ENCODE measurements at regions of chr5 and their contacts with region 1.

Region 1: DNA sequence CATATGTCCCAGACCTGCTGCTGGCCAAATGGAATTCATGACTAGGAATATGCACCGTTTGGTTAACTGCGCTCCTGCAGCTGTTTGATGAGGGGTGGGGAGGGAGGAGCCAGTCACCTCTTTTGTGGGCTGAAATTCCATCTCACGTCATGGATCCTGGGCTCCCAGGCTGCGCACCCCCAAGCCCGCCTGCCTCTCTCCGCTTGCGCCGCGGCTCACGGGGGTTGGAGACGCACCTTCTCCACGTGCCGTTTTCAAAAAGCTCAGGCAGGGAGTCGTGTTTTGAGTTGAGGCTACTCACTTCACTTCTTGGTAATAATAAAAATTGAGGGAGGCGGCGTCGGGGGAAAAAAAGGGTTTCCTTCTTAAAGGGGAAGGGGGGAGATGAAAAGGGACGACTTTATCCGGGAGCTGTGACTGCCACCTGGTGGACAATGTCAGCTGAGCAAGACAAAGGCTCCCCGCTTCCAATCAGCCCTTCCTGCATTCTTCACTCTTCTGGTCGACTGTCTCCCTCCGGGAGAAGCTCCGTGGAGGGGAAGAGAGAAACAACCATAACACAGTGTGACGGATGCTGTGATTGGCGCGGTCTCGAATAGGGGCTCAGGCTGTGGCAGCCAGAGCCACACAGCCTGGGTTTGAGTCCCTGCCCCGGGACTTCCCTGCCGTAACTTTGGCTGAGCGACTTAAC is 15.9 kb upstream of the C5orf47 start:
- DNase-seq: peak; percentile 83 to 86
- ATAC-seq: peak; percentile 55 to 72
- H3K4me3 ChIP-seq: peak overlapping the region; percentile 35; the same call in 2 of the 3 replicates
- H3K27ac ChIP-seq: peak overlapping the region; percentile 96 to 97
- H3K4me1 ChIP-seq: peaks cover 53% of the 10 kb centered on the region
- CTCF ChIP-seq: peak; percentile 94
- EP300 ChIP-seq: no peak
- POLR2A ChIP-seq: no peak
- RAD21 ChIP-seq: peak; percentile 97 to 99

Region 2: DNA sequence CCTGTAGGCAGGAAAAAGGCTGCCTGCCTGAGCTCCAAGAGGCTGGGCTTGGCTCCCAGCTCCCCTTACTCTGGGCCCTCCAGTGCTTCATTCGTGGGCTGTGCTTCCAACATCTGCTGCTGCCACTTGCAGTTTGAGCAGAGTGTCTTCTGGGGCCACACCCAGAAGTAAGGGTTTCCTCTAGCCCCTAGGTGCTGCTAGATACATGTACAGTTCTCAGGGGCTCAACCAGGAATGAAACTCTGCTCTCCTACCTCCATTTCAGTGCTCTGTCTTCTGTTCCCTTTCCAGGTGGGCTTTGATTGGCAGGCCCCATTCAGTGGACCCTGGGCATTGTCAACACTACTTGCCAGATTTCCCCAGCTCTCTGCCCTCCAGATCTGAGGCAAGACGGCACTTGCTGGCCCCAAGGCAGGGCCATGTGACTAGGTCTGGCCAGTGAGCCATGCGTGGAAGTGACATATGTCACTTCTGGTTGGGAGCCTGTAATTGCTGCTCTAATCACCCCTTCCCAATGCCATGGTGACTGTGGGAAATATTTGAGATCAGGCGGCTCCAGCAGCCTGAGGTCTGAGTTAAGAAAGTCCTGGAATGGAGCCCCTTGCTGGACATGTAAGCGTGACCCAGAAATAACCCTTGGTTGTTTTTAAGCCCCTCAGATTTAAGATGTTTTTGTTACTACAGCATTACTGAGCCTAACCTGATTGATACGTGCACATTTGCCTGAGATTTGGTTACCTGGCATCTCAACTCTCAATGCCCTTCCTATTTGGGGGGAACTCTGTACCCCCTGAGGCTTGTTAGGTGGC is 347.2 kb before region 1 on chr5:
- CTCF ChIA-PET with region 1: interaction called, 229 read pairs
- POLR2A ChIA-PET with region 1: no interaction called
- DNase-seq: no peak
- ATAC-seq: peak; percentile 44 to 67; a peak in 4 of 6 replicates
- H3K4me3 ChIP-seq: no peak overlapping the region
- H3K27ac ChIP-seq: peak overlapping the region; percentile 45 to 76; a peak in 5 of 6 replicates
- H3K4me1 ChIP-seq: peaks cover 28% of the 10 kb centered on the region
- CTCF ChIP-seq: no peak; the same call in 2 of the 3 replicates
- EP300 ChIP-seq: no peak
- POLR2A ChIP-seq: no peak
- RAD21 ChIP-seq: peak; percentile 23 to 52; a peak in 3 of 5 replicates

Region 3: DNA sequence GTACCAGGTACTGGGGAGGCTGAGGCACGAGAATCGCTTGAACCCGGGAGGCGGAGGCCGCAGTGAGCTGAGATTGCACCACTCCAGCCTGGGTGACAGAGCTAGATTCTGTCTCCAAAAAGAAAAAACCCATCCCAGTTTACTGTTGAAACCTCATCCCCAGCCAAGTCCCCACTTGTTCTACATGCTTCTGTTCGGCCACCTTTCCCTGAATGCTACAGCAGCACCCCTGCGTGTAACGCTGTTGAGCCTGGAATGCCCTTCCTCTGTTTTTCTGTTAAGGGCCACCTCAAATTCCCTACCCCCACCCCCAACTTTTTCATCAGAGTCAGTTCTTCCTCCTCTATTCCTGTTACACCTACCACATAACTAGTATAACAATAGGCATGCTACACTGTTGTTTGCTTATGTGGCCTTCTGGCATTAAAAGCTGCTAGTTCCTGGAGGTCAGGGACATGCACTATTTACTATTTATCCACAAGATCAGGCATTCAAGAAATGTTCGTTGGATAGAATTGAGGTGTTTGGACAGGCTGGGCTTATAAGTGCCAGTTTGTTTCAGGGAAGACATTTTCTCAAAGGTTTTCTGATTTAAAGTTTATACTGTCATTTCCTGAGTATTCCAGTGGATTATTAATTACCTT is 31.2 kb before region 1 on chr5:
- CTCF ChIA-PET with region 1: interaction called, 14 read pairs
- POLR2A ChIA-PET with region 1: no interaction called
- DNase-seq: peak in 1 of 2 experiments; percentile 85
- ATAC-seq: peak; percentile 71 to 93
- H3K4me3 ChIP-seq: peak overlapping the region; percentile 1; the same call in 2 of the 3 replicates
- H3K27ac ChIP-seq: peak overlapping the region; percentile 66 to 84
- H3K4me1 ChIP-seq: peaks cover 62% of the 10 kb centered on the region
- CTCF ChIP-seq: no peak
- EP300 ChIP-seq: no peak
- POLR2A ChIP-seq: no peak
- RAD21 ChIP-seq: peak in 1 of 2 experiments; percentile 14; a peak in 1 of 5 replicates

Region 4: DNA sequence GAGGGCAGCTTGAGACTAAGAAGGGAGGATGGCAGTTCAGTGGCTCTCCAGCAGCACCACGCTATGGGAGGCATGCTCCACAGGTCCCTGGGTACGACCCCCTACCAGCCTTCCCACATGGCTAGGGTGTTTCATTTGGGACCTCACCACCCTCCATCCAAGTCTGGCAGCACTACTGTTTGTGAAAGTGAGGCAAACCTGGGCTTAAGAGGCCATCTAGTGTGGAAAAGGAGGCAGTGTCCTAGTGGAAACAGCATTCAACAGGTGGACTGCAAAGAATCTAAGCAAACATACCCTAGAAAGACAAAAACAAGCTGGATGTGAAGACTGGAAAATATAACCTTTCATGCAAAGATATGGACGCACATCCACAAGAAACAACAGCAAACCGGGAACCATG is 11.1 kb after region 1 on chr5:
- CTCF ChIA-PET with region 1: interaction called, 43 read pairs
- POLR2A ChIA-PET with region 1: no interaction called
- DNase-seq: peak in 1 of 2 experiments; percentile 49
- ATAC-seq: peak; percentile 73 to 74
- H3K4me3 ChIP-seq: no peak overlapping the region
- H3K27ac ChIP-seq: no peak overlapping the region
- H3K4me1 ChIP-seq: no peaks in the 10 kb centered on the region
- CTCF ChIP-seq: peak; percentile 43
- EP300 ChIP-seq: no peak
- POLR2A ChIP-seq: no peak; the same call in 1 of the 2 replicates
- RAD21 ChIP-seq: peak; percentile 65 to 72

Region 5: DNA sequence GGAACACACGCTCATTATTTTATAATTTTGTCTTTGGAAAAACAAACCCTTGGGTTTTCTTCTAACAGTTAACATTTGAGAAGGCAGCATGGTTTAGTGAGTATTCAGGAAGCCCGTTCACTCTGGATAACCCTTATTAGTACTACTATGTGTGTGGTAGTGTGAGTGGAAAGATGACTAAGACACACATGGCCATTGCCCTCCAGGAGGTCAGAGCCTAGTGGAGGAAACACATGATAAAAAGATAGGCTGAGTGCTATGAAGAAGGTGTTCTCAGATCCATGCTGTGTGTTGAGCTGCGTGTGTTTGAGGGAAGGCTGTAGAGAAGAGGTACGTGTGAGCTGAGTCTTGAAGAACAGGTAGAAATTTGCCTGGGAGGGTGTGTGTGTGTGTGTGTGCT is 24.3 kb after region 1 on chr5:
- CTCF ChIA-PET with region 1: interaction called, 18 read pairs
- POLR2A ChIA-PET with region 1: interaction called, 5 read pairs
- DNase-seq: no peak
- ATAC-seq: peak in 1 of 2 experiments; percentile 56; a peak in 3 of 6 replicates
- H3K4me3 ChIP-seq: no peak overlapping the region
- H3K27ac ChIP-seq: no peak overlapping the region
- H3K4me1 ChIP-seq: 0 out of 3 replicates have a peak, but pooled peaks cover 3% of the 10 kb centered on the region
- CTCF ChIP-seq: no peak
- EP300 ChIP-seq: no peak
- POLR2A ChIP-seq: no peak
- RAD21 ChIP-seq: no peak